Heart right ventricle (tissue), 16 donors: ENCODE measurements at regions of chr22 and their contacts with region 1.

Region 1: DNA sequence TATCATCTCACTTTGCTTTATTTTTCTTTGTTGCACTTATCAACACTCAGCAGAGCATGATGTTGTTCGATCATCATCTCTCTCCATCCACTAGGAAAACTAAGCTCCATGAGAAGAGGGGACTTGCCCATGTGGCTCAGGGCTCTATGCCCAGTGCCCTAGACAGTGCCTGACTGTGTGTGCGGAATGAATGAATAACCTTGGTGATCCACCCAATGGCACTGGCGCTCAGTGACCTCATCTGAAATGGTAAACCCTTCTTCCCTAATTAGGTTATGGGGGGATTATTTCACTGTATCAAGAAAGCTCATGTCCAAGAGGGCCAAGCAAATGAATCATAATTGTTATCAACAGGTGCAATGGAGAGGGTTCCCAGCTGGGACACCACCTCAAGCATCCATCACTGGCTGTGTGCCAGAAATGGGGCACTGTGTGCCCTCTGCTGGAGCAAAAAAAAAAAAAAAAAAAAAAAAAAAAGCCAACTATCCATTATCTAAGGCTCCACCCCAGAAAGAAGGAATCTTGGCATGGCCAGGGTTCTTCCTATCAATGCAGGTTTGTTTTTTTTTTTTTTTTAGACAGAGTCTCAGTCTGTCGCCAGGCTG is 172.6 kb downstream of the LARGE1 start:
- DNase-seq: no peak
- ATAC-seq: peak in 5 of 8 donors; percentile 16 to 45 (median 33)
- H3K4me3 ChIP-seq: no peak overlapping the region
- H3K27ac ChIP-seq: no peak overlapping the region
- H3K4me1 ChIP-seq: peaks cover 4 to 29% (median 17%) of the 10 kb centered on the region in 9 donors
- H3K27me3 ChIP-seq: no peaks in the 10 kb centered on the region
- CTCF ChIP-seq: peak in 2 of 9 donors; percentile 5 to 7

Region 2: GRCh38 chr22:33687464-33687863 is 60.2 kb before region 1 on chr22:
- intact Hi-C with region 1: no loop called
- DNase-seq: no peak
- ATAC-seq: no peak
- H3K4me3 ChIP-seq: no peak overlapping the region
- H3K27ac ChIP-seq: no peak overlapping the region
- H3K4me1 ChIP-seq: peaks cover 0 to 8% (median 0%) of the 10 kb centered on the region in 9 donors
- H3K27me3 ChIP-seq: no peaks in the 10 kb centered on the region
- CTCF ChIP-seq: no peak

Region 3: DNA sequence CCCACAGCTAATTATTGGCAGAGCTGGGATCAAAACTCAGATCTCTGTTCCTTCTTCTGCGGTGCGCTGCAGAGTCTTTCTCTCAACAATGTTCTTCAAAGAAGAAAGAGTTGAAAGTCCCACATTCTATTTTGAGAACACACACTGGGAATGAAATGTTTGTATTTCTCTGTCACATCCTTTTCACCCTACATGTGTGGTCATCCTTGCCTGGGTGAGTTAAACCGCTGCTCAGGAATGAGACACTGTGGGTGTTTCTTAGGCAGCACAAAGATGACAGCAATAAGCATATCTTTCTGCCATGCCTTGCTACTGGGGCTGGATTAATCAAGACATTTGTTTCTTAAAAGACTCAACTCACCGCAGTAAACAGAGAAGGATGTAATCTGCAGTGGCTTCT is 50.0 kb before region 1 on chr22:
- intact Hi-C with region 1: loop called in 1 of 10 experiments (anchors 2 kb)
- DNase-seq: no peak
- ATAC-seq: no peak
- H3K4me3 ChIP-seq: no peak overlapping the region
- H3K27ac ChIP-seq: no peak overlapping the region
- H3K4me1 ChIP-seq: peaks cover 0 to 21% (median 5%) of the 10 kb centered on the region in 9 donors
- H3K27me3 ChIP-seq: no peaks in the 10 kb centered on the region
- CTCF ChIP-seq: no peak